Posterior cingulate gyrus (tissue), 11 donors: ENCODE measurements at regions of chr14 and their contacts with region 1.

Region 1: GRCh38 chr14:58107947-58108552 is 44.0 kb downstream of the ARMH4 start:
- DNase-seq: peak in 4 of 10 donors; percentile 35 to 45 (median 42)

Region 2: GRCh38 chr14:58166005-58166983 is 58.2 kb after region 1 on chr14:
- intact Hi-C with region 1: loop called (anchors 1 kb)
- DNase-seq: peak; percentile 69 to 97 (median 88)

Region 3: GRCh38 chr14:58239244-58240195 is 131.5 kb after region 1 on chr14:
- intact Hi-C with region 1: loop called (anchors 10 kb)
- DNase-seq: peak; percentile 56 to 94 (median 68)

Region 4: DNA sequence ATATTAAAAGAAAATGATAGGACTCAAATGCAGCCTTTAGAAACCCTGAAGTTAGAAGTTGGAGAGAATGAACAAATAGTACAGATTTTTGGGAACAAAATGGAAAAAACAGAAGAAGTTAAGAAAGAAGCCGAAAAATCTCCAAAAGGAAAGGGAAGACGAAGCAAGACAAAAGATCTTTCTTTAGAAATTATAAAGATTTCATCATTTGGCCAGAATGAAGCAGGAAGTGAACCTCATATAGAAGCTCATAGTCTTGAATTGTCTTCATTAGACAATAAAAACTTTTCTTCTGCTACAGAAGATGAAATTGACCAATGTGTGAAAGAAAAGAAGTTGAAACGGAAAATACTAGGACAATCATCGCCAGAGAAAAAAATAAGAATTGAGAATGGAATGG is 256.3 kb after region 1 on chr14:
- intact Hi-C with region 1: loop called (anchors 2 kb)
- DNase-seq: no peak